ENCODE measurements at regions of chr1 and their contacts with region 1.

Region 1: GRCh38 chr1:170356585-170356984 is 175.4 kb upstream of the GORAB start:
- DNase-seq: no peak
- H3K4me3 ChIP-seq: no peak overlapping the region
- H3K27ac ChIP-seq: no peak overlapping the region
- H3K4me1 ChIP-seq: no peaks in the 10 kb centered on the region
- H3K27me3 ChIP-seq: no peaks in the 10 kb centered on the region
- CTCF ChIP-seq: no peak
- EP300 ChIP-seq: no peak
- POLR2A ChIP-seq: no peak

Region 2: GRCh38 chr1:170214117-170215032 is 142.2 kb before region 1 on chr1:
- in situ Hi-C with region 1: no loop called
- intact Hi-C with region 1: no loop called
- DNase-seq: no peak
- H3K4me3 ChIP-seq: no peak overlapping the region
- H3K27ac ChIP-seq: no peak overlapping the region
- H3K4me1 ChIP-seq: no peaks in the 10 kb centered on the region
- H3K27me3 ChIP-seq: no peaks in the 10 kb centered on the region
- CTCF ChIP-seq: no peak
- EP300 ChIP-seq: no peak
- POLR2A ChIP-seq: no peak

Region 3: GRCh38 chr1:170377896-170378634 is 21.5 kb after region 1 on chr1:
- in situ Hi-C with region 1: no loop called
- intact Hi-C with region 1: loop called (anchors 1 kb)
- DNase-seq: no peak
- H3K4me3 ChIP-seq: no peak overlapping the region
- H3K27ac ChIP-seq: no peak overlapping the region
- H3K4me1 ChIP-seq: no peaks in the 10 kb centered on the region
- H3K27me3 ChIP-seq: no peaks in the 10 kb centered on the region
- CTCF ChIP-seq: no peak
- EP300 ChIP-seq: no peak
- POLR2A ChIP-seq: no peak